Activated B cell treated with CpG ODN at 0.5 μM for 24 hours (primary cell): ENCODE measurements at regions of chr12 and their contacts with region 1.

Region 1: DNA sequence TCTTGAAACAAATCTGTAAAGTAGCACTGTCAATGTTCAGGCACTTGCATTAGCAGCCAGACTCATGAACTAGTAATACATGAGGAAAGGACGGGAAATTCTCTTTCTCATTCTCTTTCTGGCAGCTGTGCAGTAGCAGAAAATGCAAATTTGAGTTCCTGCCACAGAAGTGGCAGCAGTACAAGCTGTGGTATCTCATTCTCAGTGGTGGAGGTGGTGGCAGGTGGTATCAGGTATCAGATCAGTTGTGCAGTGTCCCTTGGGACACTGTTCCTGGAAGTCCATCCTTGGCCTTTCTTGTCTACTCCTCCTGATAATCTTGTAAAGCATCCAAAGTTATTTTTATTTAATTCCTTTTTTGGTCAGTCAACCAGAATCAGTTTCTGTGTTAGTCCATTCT is 103.0 kb downstream of the C12orf42 start:
- DNase-seq: no peak
- ATAC-seq: peak; percentile 79
- H3K4me3 Mint-ChIP-seq: no peak overlapping the region
- H3K27ac Mint-ChIP-seq: peak overlapping the region; percentile 59
- H3K4me1 Mint-ChIP-seq: peaks cover 20% of the 10 kb centered on the region
- H3K27me3 Mint-ChIP-seq: no peaks in the 10 kb centered on the region
- CTCF ChIP-seq: no peak

Region 2: DNA sequence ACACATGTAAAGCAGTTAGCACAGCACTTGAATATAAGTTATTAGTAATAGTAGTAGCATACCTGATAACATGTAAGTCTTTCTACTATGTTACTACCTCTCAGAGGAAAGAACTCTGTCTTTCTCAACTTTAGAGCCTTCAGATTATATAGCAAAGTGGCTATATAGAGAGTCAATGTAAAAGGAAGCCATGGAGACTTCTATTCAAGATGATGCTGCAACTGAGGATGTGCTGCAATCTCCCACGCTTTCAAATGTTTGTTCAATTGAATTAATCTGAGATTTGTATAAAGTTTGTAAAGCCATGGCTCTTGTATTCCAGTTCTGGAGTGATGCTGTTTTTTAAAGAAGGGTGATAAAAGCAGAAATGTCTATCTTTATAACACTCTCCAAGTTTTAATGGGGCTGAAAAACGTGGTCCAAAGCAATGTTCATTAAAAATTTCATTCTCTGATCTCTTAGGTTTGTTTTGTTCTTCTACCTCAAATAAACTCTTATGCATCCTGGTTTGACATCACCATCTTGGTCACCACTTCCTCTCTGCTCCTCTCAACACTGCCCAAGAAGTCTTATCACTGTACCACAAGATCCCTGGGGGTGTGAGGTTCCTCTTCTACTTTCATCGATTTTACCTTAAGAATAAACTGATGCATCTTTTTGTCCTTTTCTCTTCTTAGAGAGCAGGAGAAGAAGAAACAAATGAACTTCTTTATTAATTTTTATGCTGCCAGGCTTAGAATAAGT is 62.5 kb after region 1 on chr12:
- CTCF ChIA-PET with region 1: no interaction called
- POLR2A ChIA-PET with region 1: no interaction called
- intact Hi-C with region 1: loop called (anchors 2 kb)
- DNase-seq: no peak
- ATAC-seq: peak; percentile 98
- H3K4me3 Mint-ChIP-seq: peak overlapping the region; percentile 26
- H3K27ac Mint-ChIP-seq: peak overlapping the region; percentile 70
- H3K4me1 Mint-ChIP-seq: peaks cover 46% of the 10 kb centered on the region
- H3K27me3 Mint-ChIP-seq: no peaks in the 10 kb centered on the region
- CTCF ChIP-seq: no peak

Region 3: GRCh38 chr12:103930034-103930786 is 537.5 kb after region 1 on chr12 and contains the start of gene HSP90B1:
- CTCF ChIA-PET with region 1: no interaction called
- POLR2A ChIA-PET with region 1: no interaction called
- intact Hi-C with region 1: no loop called
- DNase-seq: peak; percentile 95
- ATAC-seq: peak; percentile 69
- H3K4me3 Mint-ChIP-seq: peak within 1 kb of the TSS; percentile 89
- H3K27ac Mint-ChIP-seq: peak within 1 kb of the TSS; percentile 97
- H3K4me1 Mint-ChIP-seq: peaks cover 68% of the 10 kb centered on the region
- H3K27me3 Mint-ChIP-seq: no peaks in the 10 kb centered on the region
- CTCF ChIP-seq: no peak
- total RNA-seq, gene HSP90B1: 346 and 368 TPM in 2 replicates